Lower leg skin (tissue), 4 donors: ENCODE measurements at regions of chr5 and their contacts with region 1.

Region 1: DNA sequence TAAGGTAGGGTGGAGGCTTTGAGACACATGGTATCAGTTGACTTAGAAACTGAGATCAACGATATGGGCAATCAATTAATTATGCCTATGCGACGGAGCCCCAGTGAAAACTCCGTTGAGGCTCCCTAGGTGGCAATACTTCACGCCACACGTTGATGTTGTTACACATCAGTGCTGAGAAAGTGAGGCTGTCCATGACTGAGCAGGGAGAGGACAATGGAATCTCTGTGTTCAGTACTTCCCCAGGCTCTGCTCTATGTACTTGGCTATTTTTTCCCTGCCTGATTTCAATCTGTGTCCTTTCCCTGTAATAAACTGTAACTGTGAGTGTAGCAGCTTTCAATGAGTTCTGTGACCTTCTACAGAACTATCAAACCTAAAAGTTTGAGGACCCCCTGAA is 211.7 kb downstream of the SNCAIP start:
- DNase-seq: no peak
- H3K4me3 ChIP-seq: no peak overlapping the region
- CTCF ChIP-seq: no peak
- POLR2A ChIP-seq: no peak

Region 2: GRCh38 chr5:122385808-122386207 is 138.0 kb before region 1 on chr5:
- intact Hi-C with region 1: no loop called
- DNase-seq: no peak
- H3K4me3 ChIP-seq: no peak overlapping the region
- CTCF ChIP-seq: no peak
- POLR2A ChIP-seq: no peak

Region 3: DNA sequence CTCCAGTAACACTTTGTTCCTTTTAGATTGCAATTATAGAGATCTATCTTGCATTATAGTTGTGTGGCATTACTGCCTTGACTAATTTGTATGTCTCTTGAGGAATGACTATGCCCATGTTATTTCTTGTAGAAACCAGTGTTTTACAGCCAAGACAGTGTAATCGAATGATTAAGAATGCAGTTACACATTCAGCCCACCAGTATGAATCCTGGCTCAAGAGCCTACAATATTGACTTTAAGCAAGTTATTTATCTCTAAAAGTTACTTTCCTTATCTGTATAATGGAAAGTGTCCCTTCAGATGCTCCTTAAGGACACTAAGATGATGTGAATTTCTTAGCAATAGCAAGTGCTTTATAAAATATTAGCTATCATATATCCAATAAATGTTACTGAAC is 311.9 kb after region 1 on chr5:
- intact Hi-C with region 1: no loop called
- DNase-seq: no peak
- H3K4me3 ChIP-seq: no peak overlapping the region
- CTCF ChIP-seq: no peak
- POLR2A ChIP-seq: no peak

Region 4: GRCh38 chr5:123617561-123617960 is 1093.8 kb after region 1 on chr5:
- intact Hi-C with region 1: loop called (anchors 5 kb)
- DNase-seq: no peak
- H3K4me3 ChIP-seq: no peak overlapping the region
- CTCF ChIP-seq: no peak
- POLR2A ChIP-seq: no peak